ENCODE measurements at regions of chr17 and their contacts with region 1.

Region 1: GRCh38 chr17:10226930-10227685 is 28.7 kb upstream of the GAS7 start:
- DNase-seq: peak; percentile 62 to 72
- ATAC-seq: peak; percentile 73 to 88 (median 81)
- H3K4me3 ChIP-seq: no peak overlapping the region
- H3K4me3 Mint-ChIP-seq: no peak overlapping the region
- H3K27ac ChIP-seq: no peak overlapping the region
- H3K27ac Mint-ChIP-seq: no peak overlapping the region
- H3K4me1 ChIP-seq: peaks cover 12% of the 10 kb centered on the region
- H3K4me1 Mint-ChIP-seq: peaks cover 5 to 17% of the 10 kb centered on the region in 2 donors
- H3K27me3 ChIP-seq: no peaks in the 10 kb centered on the region
- H3K27me3 Mint-ChIP-seq: peaks cover 0 to 2% of the 10 kb centered on the region in 2 donors
- CTCF ChIP-seq: peak; percentile 99

Region 2: GRCh38 chr17:9968902-9969617 is 258.0 kb before region 1 on chr17:
- intact Hi-C with region 1: loop called (anchors 1 kb)
- DNase-seq: no peak
- ATAC-seq: no peak
- H3K4me3 ChIP-seq: no peak overlapping the region
- H3K4me3 Mint-ChIP-seq: no peak overlapping the region
- H3K27ac ChIP-seq: no peak overlapping the region
- H3K27ac Mint-ChIP-seq: peak overlapping the region; percentile 19 to 65
- H3K4me1 ChIP-seq: peaks cover 32% of the 10 kb centered on the region
- H3K4me1 Mint-ChIP-seq: peaks cover 51 to 66% of the 10 kb centered on the region in 2 donors
- H3K27me3 ChIP-seq: no peaks in the 10 kb centered on the region
- H3K27me3 Mint-ChIP-seq: no peaks in the 10 kb centered on the region
- CTCF ChIP-seq: no peak

Region 3: GRCh38 chr17:10105513-10106001 is 121.6 kb before region 1 on chr17:
- intact Hi-C with region 1: no loop called
- DNase-seq: no peak
- ATAC-seq: no peak
- H3K4me3 ChIP-seq: no peak overlapping the region
- H3K4me3 Mint-ChIP-seq: no peak overlapping the region
- H3K27ac ChIP-seq: no peak overlapping the region
- H3K27ac Mint-ChIP-seq: peak overlapping the region in 1 of 2 donors; percentile 75
- H3K4me1 ChIP-seq: peaks cover 35% of the 10 kb centered on the region
- H3K4me1 Mint-ChIP-seq: peaks cover 52 to 53% of the 10 kb centered on the region in 2 donors
- H3K27me3 ChIP-seq: no peaks in the 10 kb centered on the region
- H3K27me3 Mint-ChIP-seq: no peaks in the 10 kb centered on the region
- CTCF ChIP-seq: no peak

Region 4: GRCh38 chr17:10149573-10150399 is 77.3 kb before region 1 on chr17:
- intact Hi-C with region 1: no loop called
- DNase-seq: peak in 1 of 2 donors; percentile 71
- ATAC-seq: peak; percentile 35 to 65 (median 62)
- H3K4me3 ChIP-seq: no peak overlapping the region
- H3K4me3 Mint-ChIP-seq: peak overlapping the region; percentile 69
- H3K27ac ChIP-seq: peak overlapping the region; percentile 72
- H3K27ac Mint-ChIP-seq: peak overlapping the region; percentile 85 to 94
- H3K4me1 ChIP-seq: peaks cover 83% of the 10 kb centered on the region
- H3K4me1 Mint-ChIP-seq: peaks cover 38 to 43% of the 10 kb centered on the region in 2 donors
- H3K27me3 ChIP-seq: no peaks in the 10 kb centered on the region
- H3K27me3 Mint-ChIP-seq: no peaks in the 10 kb centered on the region
- CTCF ChIP-seq: no peak

Region 5: GRCh38 chr17:10243883-10244844 is 17.1 kb after region 1 on chr17:
- intact Hi-C with region 1: no loop called
- DNase-seq: no peak
- ATAC-seq: no peak
- H3K4me3 ChIP-seq: no peak overlapping the region
- H3K4me3 Mint-ChIP-seq: no peak overlapping the region
- H3K27ac ChIP-seq: no peak overlapping the region
- H3K27ac Mint-ChIP-seq: no peak overlapping the region
- H3K4me1 ChIP-seq: no peaks in the 10 kb centered on the region
- H3K4me1 Mint-ChIP-seq: no peaks in the 10 kb centered on the region
- H3K27me3 ChIP-seq: no peaks in the 10 kb centered on the region
- H3K27me3 Mint-ChIP-seq: peaks cover 10% of the 10 kb centered on the region in 2 donors
- CTCF ChIP-seq: no peak

Region 6: GRCh38 chr17:10327640-10328039 is 100.5 kb after region 1 on chr17:
- intact Hi-C with region 1: no loop called
- DNase-seq: peak; percentile 71 to 78
- ATAC-seq: peak; percentile 75 to 95 (median 87)
- H3K4me3 ChIP-seq: no peak overlapping the region
- H3K4me3 Mint-ChIP-seq: no peak overlapping the region
- H3K27ac ChIP-seq: no peak overlapping the region
- H3K27ac Mint-ChIP-seq: no peak overlapping the region
- H3K4me1 ChIP-seq: no peaks in the 10 kb centered on the region
- H3K4me1 Mint-ChIP-seq: peaks cover 0 to 5% of the 10 kb centered on the region in 2 donors
- H3K27me3 ChIP-seq: no peaks in the 10 kb centered on the region
- H3K27me3 Mint-ChIP-seq: peaks cover 13 to 21% of the 10 kb centered on the region in 2 donors
- CTCF ChIP-seq: peak; percentile 94

Measured in natural killer cell (primary cell).